ENCODE measurements at regions of chr10 and their contacts with region 1.

Region 1: DNA sequence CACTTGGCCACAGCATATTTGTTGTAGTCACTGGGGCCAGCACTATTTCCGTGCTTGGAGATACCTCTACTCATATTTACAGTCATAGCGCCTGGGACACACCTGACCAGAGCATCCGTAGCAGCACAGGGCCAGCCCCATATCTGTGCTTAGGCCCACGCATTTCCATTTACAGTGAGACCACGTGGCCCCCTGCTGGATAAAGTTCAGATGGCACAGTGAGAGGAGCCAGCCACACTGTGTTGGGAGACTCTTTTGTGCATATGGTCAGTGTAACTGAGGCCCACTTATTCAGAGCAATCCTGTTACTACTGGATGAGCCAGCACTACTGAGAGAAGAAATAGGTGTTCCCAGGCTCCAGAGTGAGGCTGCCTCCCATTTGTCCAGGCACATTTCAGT is 455.3 kb downstream of the REEP3 start:
- DNase-seq: no peak
- H3K4me3 ChIP-seq: no peak overlapping the region
- H3K27ac ChIP-seq: no peak overlapping the region
- H3K4me1 ChIP-seq: no peaks in the 10 kb centered on the region
- H3K27me3 ChIP-seq: no peaks in the 10 kb centered on the region
- CTCF ChIP-seq: peak; percentile 28 to 32

Region 2: GRCh38 chr10:63878428-63878827 is 98.1 kb before region 1 on chr10:
- intact Hi-C with region 1: loop called (anchors 10 kb)
- DNase-seq: no peak
- H3K4me3 ChIP-seq: no peak overlapping the region
- H3K27ac ChIP-seq: no peak overlapping the region
- H3K4me1 ChIP-seq: no peaks in the 10 kb centered on the region
- H3K27me3 ChIP-seq: no peaks in the 10 kb centered on the region
- CTCF ChIP-seq: no peak